Mammary epithelial cell (primary cell): ENCODE measurements at regions of chr9 and their contacts with region 1.

Region 1: DNA sequence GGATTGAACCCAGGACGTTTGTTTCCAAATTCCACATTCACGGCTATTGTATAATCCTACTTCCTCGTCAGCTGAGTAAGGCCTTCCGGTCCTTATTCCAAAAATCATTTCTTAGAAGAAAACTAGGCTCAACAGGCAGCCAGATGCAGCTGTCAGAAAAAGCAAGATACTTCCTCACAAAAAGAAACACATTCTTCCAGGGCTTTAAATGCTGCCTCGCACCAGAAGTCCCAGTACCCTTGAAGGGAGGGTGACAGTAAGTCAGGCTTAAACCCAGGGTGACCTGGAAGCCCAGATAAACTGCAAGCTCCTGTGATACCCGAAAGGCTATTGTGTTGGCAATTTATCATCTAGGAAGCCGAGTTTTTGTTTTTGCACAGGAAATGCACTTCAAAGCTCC is 414.0 kb downstream of the NFIB start:
- DNase-seq: no peak
- H3K4me3 ChIP-seq: no peak overlapping the region
- H3K27ac ChIP-seq: peak overlapping the region; percentile 94
- H3K4me1 ChIP-seq: peaks cover 22% of the 10 kb centered on the region
- H3K27me3 ChIP-seq: no peaks in the 10 kb centered on the region
- CTCF ChIP-seq: no peak

Region 2: GRCh38 chr9:13857521-13857920 is 42.4 kb before region 1 on chr9:
- CTCF ChIA-PET with region 1: no interaction called
- dilution Hi-C with region 1: no loop called
- in situ Hi-C with region 1: no loop called
- intact Hi-C with region 1: loop called (anchors 5 kb)
- DNase-seq: peak; percentile 68
- H3K4me3 ChIP-seq: no peak overlapping the region
- H3K27ac ChIP-seq: no peak overlapping the region
- H3K4me1 ChIP-seq: no peaks in the 10 kb centered on the region
- H3K27me3 ChIP-seq: no peaks in the 10 kb centered on the region
- CTCF ChIP-seq: no peak

Region 3: DNA sequence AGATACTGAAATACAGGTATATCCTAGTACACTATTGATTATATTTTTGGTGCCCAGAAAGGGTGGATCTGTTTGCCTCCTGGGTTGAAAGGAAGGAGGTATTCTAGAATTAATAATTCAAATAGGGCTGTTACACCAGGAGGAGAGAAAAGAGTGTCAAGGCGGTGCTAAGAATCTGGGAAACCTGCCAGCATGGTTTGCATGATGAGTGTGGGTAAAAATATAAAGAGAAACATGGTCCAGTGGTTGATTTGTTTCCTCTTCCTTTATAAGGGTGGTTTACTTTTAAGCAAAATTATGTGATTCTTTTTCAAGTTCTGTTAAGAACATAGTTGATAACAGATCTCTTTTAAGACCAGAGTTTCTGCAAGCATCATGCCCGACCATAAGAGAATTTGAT is 483.4 kb after region 1 on chr9:
- CTCF ChIA-PET with region 1: no interaction called
- dilution Hi-C with region 1: no loop called
- in situ Hi-C with region 1: no loop called
- intact Hi-C with region 1: no loop called
- DNase-seq: no peak
- H3K4me3 ChIP-seq: no peak overlapping the region
- H3K27ac ChIP-seq: no peak overlapping the region
- H3K4me1 ChIP-seq: no peaks in the 10 kb centered on the region
- H3K27me3 ChIP-seq: no peaks in the 10 kb centered on the region
- CTCF ChIP-seq: no peak